AG04450 (cell line): ENCODE measurements at regions of chr1 and their contacts with region 1.

Region 1: DNA sequence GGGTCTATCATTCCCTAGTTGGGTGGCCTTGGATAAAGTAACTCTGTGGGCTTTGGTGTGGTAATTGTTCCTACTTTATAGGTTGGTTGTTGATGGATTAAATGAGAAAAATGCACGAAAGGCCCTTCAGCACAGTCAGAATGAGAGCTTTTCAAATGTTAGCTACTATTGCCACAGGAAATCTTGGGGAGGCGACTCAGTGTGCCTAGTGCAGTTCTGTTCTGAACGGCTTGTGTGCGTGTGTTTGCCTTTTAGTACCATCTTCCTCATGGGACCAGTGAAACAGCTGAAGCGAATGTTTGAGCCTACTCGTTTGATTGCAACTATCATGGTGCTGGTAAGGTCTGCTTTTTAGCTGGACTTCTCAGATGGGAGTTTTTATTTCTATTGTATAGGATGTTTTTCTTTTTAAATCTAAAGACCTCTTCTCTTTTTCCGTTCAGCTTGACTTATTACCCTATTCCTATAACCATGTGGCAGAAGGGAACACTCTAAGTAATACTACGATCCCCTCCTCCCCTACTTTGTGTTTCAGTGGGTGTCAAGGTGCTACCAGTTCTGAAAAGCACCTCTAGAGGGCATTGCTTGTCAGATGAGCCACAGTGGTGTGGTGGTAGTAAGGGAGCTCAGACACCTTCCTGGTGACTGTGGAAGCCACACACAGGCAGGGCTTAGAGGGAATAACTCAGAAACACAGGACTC is 9.2 kb downstream of the SFT2D2 start:
- DNase-seq: no peak
- H3K4me3 ChIP-seq: no peak overlapping the region
- H3K27ac ChIP-seq: no peak overlapping the region
- H3K27me3 ChIP-seq: no peaks in the 10 kb centered on the region
- CTCF ChIP-seq: peak; percentile 64

Region 2: DNA sequence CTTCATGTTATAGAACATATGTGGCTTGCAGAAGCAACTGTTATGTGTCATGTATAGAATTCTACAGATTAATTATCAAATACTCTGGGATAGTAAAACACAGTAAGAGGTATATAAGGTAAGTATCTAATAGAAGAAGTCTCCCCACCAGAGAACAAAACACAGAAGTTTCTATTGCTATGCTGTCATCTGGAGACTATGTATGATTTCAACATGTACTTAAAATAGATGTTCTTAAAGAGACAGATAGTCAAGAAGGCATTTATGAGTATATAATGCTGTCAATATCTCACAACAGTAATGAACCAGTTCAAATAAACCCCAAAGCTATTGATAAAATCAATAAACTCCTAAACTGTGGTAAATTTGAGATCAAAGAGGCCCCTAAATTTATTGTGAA is 313.0 kb before region 1 on chr1:
- CTCF ChIA-PET with region 1: no interaction called
- POLR2A ChIA-PET with region 1: no interaction called
- DNase-seq: no peak
- H3K4me3 ChIP-seq: no peak overlapping the region
- H3K27ac ChIP-seq: no peak overlapping the region
- H3K27me3 ChIP-seq: no peaks in the 10 kb centered on the region
- CTCF ChIP-seq: no peak

Region 3: DNA sequence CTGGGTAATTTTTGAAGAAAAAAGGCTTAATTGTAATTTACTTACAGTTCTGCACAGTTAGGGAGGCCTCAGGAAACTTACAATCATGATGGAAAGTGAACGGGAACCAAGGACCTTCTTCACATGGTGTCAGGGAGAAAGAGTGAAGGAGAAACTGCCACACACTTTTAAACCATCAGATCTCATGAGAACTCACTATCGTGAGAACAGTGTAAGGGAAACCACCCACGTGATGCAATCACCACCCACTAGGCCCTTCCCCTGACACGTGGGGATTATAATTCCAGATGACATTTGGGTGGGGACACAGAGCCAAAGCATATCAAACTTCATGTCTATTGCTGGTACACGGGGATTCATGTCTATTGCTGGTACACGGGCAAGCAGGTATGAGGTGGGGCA is 14.5 kb before region 1 on chr1:
- CTCF ChIA-PET with region 1: interaction called, 22 read pairs
- POLR2A ChIA-PET with region 1: interaction called, 4 read pairs
- DNase-seq: no peak
- H3K4me3 ChIP-seq: no peak overlapping the region
- H3K27ac ChIP-seq: no peak overlapping the region
- H3K27me3 ChIP-seq: peaks cover 3% of the 10 kb centered on the region
- CTCF ChIP-seq: no peak

Region 4: DNA sequence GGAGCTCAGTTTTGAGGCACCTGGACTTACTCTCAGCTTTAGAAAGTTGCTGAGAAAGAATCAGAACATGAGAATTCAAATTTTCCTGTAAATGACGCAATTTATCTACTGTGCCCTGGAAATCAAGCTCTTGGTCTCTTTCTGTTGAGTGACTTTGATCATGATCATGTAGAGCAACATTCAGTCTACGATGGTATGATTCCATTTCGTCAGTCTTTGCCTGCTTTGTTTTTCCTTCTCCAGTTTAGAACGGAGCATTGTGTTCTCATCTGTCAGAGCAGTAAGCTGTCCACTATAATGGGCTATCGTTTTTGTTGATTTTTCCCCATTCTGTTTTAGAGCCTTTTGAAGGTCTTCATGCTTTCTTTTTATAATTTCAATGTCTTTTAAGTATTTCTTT is 11.5 kb after region 1 on chr1:
- CTCF ChIA-PET with region 1: interaction called, 11 read pairs
- POLR2A ChIA-PET with region 1: no interaction called
- DNase-seq: no peak
- H3K4me3 ChIP-seq: no peak overlapping the region
- H3K27ac ChIP-seq: no peak overlapping the region
- H3K27me3 ChIP-seq: no peaks in the 10 kb centered on the region
- CTCF ChIP-seq: no peak